OCI-LY7 (cell line): ENCODE measurements at regions of chr3 and their contacts with region 1.

Region 1: DNA sequence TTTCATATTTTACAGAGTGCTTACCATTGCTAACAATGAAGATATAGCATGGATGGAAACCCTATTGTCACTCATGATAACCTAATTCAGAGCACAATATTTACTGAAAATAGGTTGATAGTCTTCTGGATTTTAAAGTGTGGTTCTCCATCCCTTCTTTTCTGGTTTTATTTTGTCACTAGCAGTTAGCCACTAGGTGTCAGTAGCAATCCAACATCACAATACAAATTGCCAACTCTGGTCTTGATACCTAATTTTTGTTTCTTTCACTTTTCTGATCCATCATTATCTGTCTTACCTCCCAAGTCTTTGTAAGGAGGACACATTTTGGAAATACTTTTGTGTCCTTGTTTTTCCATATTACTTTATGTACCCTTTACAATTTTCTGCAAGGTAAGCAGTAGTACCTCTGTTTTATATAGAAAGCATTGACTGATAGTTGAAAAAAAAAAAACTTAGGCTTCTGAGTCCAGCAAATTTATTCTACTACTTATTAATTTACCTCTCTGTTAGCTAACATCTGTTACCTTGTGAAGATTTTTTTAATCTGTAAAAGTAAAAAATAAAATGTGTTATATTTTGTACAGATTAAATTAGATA is 28.3 kb upstream of the CRYBG3 start:
- DNase-seq: peak; percentile 53
- H3K4me3 ChIP-seq: no peak overlapping the region
- H3K27ac ChIP-seq: no peak overlapping the region
- H3K4me1 ChIP-seq: no peaks in the 10 kb centered on the region
- CTCF ChIP-seq: peak; percentile 95

Region 2: GRCh38 chr3:97197101-97197500 is 596.4 kb before region 1 on chr3:
- CTCF ChIA-PET with region 1: no interaction called
- POLR2A ChIA-PET with region 1: no interaction called
- intact Hi-C with region 1: no loop called
- DNase-seq: no peak
- H3K4me3 ChIP-seq: no peak overlapping the region
- H3K27ac ChIP-seq: no peak overlapping the region
- H3K4me1 ChIP-seq: no peaks in the 10 kb centered on the region
- CTCF ChIP-seq: no peak

Region 3: GRCh38 chr3:97764407-97765238 is 28.9 kb before region 1 on chr3 and contains the start of gene ARL6:
- CTCF ChIA-PET with region 1: no interaction called
- POLR2A ChIA-PET with region 1: no interaction called
- intact Hi-C with region 1: no loop called
- DNase-seq: peak; percentile 78
- H3K4me3 ChIP-seq: peak within 1 kb of the TSS; percentile 86
- H3K27ac ChIP-seq: peak within 1 kb of the TSS; percentile 48
- H3K4me1 ChIP-seq: peaks cover 10% of the 10 kb centered on the region
- CTCF ChIP-seq: peak; percentile 57; the same call in 1 of the 2 replicates
- total RNA-seq, gene ARL6: 5.0 and 8.6 TPM in 2 replicates

Region 4: DNA sequence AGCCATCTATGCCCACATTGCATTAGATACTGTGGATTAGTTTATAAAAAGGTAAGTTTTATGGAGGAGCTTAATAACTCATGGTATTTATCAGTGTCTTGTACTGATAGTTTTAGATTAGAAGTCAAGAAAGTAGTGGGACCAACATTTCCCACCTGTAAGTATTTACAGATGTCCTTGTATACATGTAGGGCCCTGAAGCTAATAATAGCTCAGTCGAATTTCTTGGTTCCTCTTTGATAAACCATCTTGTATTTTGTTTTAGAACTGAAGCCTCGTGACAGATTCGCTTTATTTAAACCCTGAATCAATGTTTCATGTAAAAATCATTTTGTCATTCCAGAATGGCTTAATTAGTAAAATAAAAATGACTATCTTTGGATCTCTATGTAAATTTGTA is 101.7 kb after region 1 on chr3:
- CTCF ChIA-PET with region 1: no interaction called
- POLR2A ChIA-PET with region 1: no interaction called
- intact Hi-C with region 1: loop called (anchors 1 kb)
- DNase-seq: peak; percentile 44
- H3K4me3 ChIP-seq: peak overlapping the region; percentile 15
- H3K27ac ChIP-seq: no peak overlapping the region
- H3K4me1 ChIP-seq: peaks cover 15% of the 10 kb centered on the region
- CTCF ChIP-seq: no peak

Region 5: DNA sequence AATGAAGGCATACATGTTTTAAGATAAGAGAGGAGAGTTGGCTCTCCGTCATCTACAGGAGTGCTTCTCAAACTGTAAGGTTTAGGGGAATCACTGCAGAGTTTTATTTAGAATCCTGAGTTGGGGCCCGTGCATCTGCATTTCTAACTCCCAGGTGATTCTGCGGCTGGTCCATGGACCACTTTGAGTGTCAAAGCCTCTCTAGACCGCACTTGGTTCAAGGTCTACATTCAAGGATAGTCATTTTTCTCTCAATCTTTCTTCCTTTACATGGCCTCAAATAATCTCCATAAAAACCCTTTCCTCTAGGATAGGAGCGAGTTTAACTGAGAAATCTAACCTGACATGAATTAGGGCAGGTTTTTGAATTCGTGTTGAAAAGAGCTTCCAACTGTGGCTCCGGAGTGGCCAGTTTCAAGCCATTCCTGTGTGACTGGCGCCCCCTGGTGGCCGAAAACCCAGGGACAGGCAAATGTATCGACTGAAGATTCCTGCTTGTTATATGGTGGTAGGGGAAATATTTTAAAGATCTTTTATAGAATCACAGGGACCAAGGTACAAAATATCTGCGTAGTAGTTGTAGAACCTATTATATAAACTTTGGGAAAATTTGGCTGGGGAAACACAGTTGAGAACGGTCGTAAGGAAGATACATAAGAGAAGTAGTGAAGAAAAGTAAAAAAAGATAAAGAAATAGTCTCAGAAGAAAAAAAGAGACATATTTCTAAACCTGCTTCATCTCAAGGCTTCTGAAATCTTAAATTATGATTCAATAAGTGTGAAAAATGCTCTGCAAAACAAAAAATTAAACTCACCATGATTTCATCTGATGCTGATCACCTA is 229.7 kb after region 1 on chr3:
- CTCF ChIA-PET with region 1: interaction called, 3 read pairs
- POLR2A ChIA-PET with region 1: no interaction called
- intact Hi-C with region 1: loop called (anchors 1 kb)
- DNase-seq: peak; percentile 70
- H3K4me3 ChIP-seq: no peak overlapping the region
- H3K27ac ChIP-seq: no peak overlapping the region
- H3K4me1 ChIP-seq: no peaks in the 10 kb centered on the region
- CTCF ChIP-seq: peak; percentile 100